ENCODE measurements at regions of chr12 and their contacts with region 1.

Region 1: DNA sequence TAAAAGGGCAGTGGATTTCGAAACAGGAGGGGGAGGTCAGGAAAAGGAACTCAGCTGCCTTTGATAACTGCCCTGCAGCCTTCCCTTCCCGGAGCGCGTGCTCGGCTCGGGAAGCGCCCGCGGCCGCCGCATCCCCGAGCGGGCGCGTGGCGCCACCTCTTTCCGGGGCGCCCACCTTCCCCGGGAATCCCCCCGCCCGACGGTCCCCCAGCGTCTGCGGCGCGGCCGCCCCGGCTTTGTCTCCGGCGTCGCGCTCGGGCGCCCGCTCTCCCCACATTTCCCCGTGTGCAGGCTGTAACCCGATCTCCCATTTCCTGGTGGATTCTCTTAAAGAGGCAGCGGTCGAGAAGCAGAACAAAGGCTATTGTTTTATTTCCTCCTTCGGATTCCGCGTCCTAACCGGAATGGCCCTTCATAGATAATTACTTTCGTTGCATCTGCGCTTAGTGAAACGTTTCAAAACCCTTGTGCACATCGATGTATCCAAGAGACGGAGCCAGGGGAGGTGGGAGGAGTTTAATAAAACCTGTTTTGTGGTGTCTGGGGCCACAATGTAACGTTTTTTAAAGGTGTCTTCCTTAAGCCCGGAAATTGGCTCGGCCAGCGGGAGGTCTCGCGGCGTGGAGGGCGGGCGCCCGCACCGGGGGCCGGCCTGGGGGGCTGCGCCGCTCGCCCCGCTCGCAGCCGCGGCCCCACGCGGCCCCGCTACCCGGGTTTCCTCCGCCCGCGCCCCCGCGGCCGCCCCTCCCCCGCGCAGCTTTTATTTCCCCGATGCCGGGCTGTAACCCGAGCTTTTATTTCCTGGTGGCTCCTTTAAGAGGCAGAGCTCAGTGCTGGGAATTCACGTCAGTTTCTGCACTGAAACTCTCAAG is at the start of gene ETV6:
- DNase-seq: peak; percentile 83 to 89
- H3K4me3 ChIP-seq: peak within 1 kb of the TSS; percentile 85
- H3K27ac ChIP-seq: peak within 1 kb of the TSS; percentile 99
- H3K4me1 ChIP-seq: peaks cover 29% of the 10 kb centered on the region
- H3K27me3 ChIP-seq: no peaks in the 10 kb centered on the region
- CTCF ChIP-seq: no peak
- total RNA-seq, gene ETV6: 52.1 and 62.8 TPM in 2 replicates

Region 2: DNA sequence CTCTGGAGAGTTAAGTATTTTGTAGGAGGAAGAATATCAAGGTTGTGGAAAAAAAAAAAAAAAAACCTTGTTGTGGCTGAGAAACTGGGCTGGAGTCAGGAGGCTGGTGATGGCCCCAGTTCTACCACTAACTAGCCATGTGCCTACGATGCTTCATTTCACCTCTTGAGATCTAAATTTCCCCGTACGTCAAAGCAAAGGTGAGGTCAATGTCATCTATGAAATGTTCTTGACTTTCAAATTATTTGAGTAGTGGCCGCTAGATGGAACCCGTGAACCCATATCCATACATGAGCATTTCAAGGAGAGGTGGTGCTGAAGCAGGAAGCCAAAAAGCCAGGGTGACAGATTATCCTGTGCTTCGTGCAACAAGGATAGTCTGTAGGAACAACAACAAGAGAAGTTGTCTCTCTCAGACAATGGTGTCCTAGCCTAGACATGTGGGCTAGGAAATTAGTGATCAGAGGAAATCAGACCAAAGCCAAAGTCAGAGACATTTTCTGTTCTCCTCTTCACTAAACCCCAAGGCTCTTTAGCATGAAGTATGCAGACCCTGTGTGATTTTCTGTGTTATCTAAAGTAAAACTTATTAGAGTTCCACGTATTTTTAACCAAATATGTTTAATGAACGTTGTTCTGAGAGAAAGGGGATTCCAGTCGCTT is 95.1 kb before region 1 on chr12:
- CTCF ChIA-PET with region 1: no interaction called
- POLR2A ChIA-PET with region 1: no interaction called
- intact Hi-C with region 1: loop called (anchors 1 kb)
- DNase-seq: peak; percentile 54 to 61
- H3K4me3 ChIP-seq: no peak overlapping the region
- H3K27ac ChIP-seq: no peak overlapping the region
- H3K4me1 ChIP-seq: peaks cover 21% of the 10 kb centered on the region; the same call in 1 of the 2 replicates
- H3K27me3 ChIP-seq: no peaks in the 10 kb centered on the region
- CTCF ChIP-seq: peak; percentile 79

Region 3: GRCh38 chr12:11633968-11634367 is 15.1 kb before region 1 on chr12:
- CTCF ChIA-PET with region 1: no interaction called
- POLR2A ChIA-PET with region 1: interaction called, 32 read pairs
- intact Hi-C with region 1: no loop called
- DNase-seq: peak; percentile 38 to 89
- H3K4me3 ChIP-seq: no peak overlapping the region
- H3K27ac ChIP-seq: peak overlapping the region; percentile 47
- H3K4me1 ChIP-seq: peaks cover 17% of the 10 kb centered on the region
- H3K27me3 ChIP-seq: no peaks in the 10 kb centered on the region
- CTCF ChIP-seq: no peak

Region 4: DNA sequence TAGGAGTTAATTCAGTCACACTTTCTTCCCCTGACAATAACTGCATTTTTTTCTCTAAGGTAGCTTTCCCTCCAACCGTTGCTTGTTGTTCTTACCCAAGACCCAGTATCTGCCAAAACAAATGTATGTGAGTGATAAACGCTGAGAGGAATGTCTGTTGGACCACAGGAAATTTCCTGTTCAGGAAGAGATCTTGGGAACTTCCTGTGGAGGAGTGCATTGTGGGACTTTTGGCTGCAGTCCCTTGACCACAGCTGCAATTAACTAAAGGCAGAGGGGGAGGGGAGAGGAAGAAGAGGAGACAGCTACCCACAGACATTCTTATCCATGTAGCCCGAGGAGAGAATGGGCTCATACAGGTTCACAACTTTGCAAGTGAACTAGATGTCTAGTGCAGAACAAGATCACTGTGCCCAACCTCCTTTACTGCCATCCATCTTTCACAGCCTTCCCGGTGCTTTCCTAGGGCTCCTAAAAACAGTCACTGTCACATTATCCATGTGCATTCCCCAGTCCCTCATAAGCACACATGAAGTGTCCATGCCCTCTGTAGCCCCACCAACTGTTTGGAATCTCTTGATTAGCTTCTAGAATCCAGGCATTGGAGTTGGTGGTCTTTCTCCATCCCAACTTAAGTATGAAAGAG is 149.9 kb after region 1 on chr12:
- CTCF ChIA-PET with region 1: no interaction called
- POLR2A ChIA-PET with region 1: interaction called, 7 read pairs
- intact Hi-C with region 1: loop called (anchors 1 kb)
- DNase-seq: peak in 1 of 2 experiments; percentile 78
- H3K4me3 ChIP-seq: no peak overlapping the region
- H3K27ac ChIP-seq: no peak overlapping the region; the same call in 1 of the 2 replicates
- H3K4me1 ChIP-seq: peaks cover 46% of the 10 kb centered on the region
- H3K27me3 ChIP-seq: no peaks in the 10 kb centered on the region
- CTCF ChIP-seq: no peak

Region 5: DNA sequence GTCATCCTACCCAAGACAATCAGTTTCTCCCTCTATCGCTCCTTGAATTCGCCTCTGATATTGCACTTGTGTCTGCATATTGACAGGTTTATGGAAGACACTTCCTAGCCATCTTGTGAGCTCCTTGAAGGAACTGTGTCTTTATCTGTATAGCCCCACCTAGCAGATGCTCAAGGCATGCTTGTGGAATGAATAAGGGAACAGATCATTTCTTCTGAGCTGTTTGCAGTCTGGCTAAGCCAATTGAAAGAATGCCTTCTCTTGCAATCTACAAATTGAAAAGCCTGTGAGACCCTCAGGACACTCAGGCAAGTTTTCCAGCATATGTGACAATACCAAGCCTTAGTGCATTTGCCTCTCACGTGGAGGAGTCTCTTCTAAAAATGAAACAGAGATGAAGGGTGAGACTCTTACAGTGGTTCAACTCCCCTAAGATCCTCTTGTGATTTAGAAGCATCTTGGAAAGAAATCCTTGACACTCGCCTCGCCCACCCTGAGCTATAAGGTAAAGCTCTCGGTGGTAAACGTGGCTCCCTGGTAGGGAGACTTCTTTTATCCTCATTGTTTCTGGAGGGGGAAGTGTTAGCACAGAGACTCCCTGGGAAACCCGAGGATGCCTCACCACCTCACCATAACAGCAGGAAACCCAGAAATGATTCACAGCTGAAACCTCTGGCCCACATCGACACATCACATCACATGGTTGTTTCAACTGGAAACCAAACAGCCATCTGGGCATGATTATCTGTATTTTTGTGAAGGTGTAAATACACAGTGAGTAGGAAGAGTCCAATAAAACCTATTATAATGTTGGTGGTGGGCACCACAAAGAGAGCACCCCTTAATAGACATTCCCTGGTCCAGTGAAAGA is 309.4 kb after region 1 on chr12:
- CTCF ChIA-PET with region 1: no interaction called
- POLR2A ChIA-PET with region 1: no interaction called
- intact Hi-C with region 1: loop called (anchors 5 kb)
- DNase-seq: peak; percentile 60 to 92
- H3K4me3 ChIP-seq: peak overlapping the region; percentile 12; the same call in 1 of the 2 replicates
- H3K27ac ChIP-seq: peak overlapping the region; percentile 99
- H3K4me1 ChIP-seq: peaks cover 28% of the 10 kb centered on the region
- H3K27me3 ChIP-seq: no peaks in the 10 kb centered on the region
- CTCF ChIP-seq: no peak; the same call in 1 of the 2 replicates

Region 6: GRCh38 chr12:12356886-12357718 is 708.0 kb after region 1 on chr12 and contains the start of gene BORCS5:
- CTCF ChIA-PET with region 1: no interaction called
- POLR2A ChIA-PET with region 1: interaction called, 13 read pairs
- intact Hi-C with region 1: no loop called
- DNase-seq: peak; percentile 94 to 99
- H3K4me3 ChIP-seq: peak within 1 kb of the TSS; percentile 70
- H3K27ac ChIP-seq: peak within 1 kb of the TSS; percentile 73
- H3K4me1 ChIP-seq: peaks cover 19% of the 10 kb centered on the region
- H3K27me3 ChIP-seq: no peaks in the 10 kb centered on the region
- CTCF ChIP-seq: no peak
- total RNA-seq, gene BORCS5: 18.2 and 19.7 TPM in 2 replicates

Measured in PC-9 (cell line).